HEK293 (cell line): ENCODE measurements at regions of chr5 and their contacts with region 1.

Region 1: GRCh38 chr5:127564002-127564769 is 46.7 kb downstream of the PRRC1 start:
- H3K4me3 ChIP-seq: no peak overlapping the region
- H3K27ac ChIP-seq: no peak overlapping the region
- H3K4me1 ChIP-seq: no peaks in the 10 kb centered on the region
- CTCF ChIP-seq: peak; percentile 76

Region 2: DNA sequence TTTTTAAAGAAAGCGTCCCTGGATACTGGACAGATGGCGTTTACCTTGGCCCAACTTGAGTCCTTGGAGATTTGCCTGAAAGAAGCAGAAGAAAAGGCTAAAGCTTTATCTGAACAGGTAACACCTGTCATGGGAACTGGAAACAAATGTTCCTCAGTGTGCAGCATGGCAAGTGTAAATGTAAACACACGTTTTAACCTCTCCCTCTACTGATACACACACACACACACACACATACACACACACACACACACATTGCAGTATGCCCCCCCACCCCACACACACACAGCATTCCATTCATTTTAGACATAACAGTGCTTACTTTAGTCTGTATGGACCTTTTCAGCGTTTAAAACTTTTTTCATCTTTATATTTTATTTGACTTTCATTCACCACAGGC is 190.1 kb after region 1 on chr5:
- CTCF ChIA-PET with region 1: interaction called, 15 read pairs
- POLR2A ChIA-PET with region 1: no interaction called
- H3K4me3 ChIP-seq: no peak overlapping the region
- H3K27ac ChIP-seq: no peak overlapping the region
- H3K4me1 ChIP-seq: no peaks in the 10 kb centered on the region
- CTCF ChIP-seq: no peak

Region 3: GRCh38 chr5:127875235-127876021 is 311.2 kb after region 1 on chr5:
- CTCF ChIA-PET with region 1: interaction called, 15 read pairs
- POLR2A ChIA-PET with region 1: no interaction called
- H3K4me3 ChIP-seq: no peak overlapping the region
- H3K27ac ChIP-seq: peak overlapping the region; percentile 64
- H3K4me1 ChIP-seq: peaks cover 6% of the 10 kb centered on the region
- CTCF ChIP-seq: peak; percentile 87